GM13977 (cell line): ENCODE measurements at regions of chr10 and their contacts with region 1.

Region 1: GRCh38 chr10:84214612-84215235 is 10.6 kb downstream of the LRIT2 start:
- DNase-seq: peak; percentile 73
- CTCF ChIP-seq: peak; percentile 83

Region 2: DNA sequence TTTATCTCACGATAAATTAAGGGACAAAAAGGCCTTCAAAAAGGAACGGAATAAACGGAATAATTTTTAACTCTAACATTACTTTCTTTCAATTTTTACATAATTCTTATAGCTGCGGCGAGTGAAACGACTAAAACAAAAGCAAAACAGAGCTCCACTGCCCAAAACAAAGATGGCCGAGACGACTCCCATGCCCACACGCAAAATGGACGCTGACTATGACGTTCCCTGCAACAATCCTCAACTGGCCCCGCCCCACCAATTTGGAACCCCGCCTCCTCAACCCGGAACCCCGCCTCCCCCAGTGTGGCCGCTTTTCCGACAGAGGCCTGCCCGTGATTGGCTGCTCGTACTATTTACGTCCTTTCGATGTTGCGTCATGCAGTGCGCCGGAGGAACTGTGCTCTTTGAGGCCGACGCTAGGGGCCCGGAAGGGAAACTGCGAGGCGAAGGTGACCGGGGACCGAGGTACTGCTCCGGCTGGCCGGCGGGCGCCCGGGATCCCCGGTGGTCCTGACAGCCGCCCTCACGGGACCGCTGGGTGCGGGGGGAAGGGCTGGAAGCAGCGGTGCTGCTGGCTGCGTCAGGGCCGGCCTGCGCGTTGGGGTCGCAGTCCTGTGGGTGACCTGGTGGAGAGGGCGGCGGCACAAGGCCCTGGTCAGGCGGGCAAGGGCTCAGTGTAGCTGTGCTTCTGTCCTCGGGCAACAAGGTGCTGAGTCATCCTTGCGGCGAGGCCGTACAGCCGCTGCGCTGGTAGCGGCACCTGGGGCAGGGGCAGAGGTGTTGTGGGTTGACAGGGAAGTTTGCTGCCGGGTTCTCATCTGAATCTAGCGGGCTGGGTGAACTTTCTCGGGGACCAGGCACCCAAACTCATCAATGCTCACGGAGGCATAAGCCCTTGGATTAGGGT is 75.3 kb before region 1 on chr10 and contains the start of gene GHITM:
- in situ Hi-C with region 1: loop called (anchors 10 kb)
- DNase-seq: peak; percentile 92
- CTCF ChIP-seq: no peak